ENCODE measurements at regions of chr17 and their contacts with region 1.

Region 1: GRCh38 chr17:27367121-27367991 is 73.4 kb downstream of the WSB1 start:
- DNase-seq: no peak
- H3K4me3 ChIP-seq: no peak overlapping the region
- CTCF ChIP-seq: no peak
- POLR2A ChIP-seq: no peak

Region 2: DNA sequence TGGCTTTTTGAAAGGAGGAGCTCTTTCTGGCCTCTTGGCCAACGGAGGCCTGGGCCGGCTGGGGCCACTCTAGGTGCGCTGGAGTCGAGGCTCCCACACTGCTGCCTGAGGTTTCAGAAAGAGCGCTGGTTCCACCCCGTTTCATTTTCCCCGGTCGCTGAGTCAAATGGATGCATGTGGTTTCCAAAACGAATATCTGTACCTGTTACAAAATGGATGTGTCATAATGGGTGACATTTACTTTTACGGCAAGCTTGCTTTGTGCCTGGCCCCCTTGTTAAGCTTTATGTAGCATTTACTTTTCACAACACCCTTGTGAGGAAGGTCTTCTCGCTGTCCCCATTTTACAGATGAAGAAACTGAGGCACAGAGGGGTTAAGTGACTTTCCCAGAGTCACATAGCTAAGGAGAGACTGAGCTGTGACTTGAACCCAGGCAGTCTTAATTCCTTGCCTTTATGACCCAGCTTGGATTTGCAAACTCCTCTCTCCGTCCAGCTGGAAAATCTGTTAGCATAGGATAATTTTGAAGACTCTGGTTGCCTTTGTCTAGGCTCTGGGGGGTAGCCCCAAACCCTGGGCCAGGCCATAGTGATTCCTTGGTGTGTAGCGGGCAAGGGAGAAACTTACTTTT is 99.5 kb after region 1 on chr17:
- intact Hi-C with region 1: loop called (anchors 10 kb)
- DNase-seq: no peak
- H3K4me3 ChIP-seq: no peak overlapping the region
- CTCF ChIP-seq: no peak
- POLR2A ChIP-seq: no peak